MCF 10A (cell line): ENCODE measurements at regions of chr17 and their contacts with region 1.

Region 1: GRCh38 chr17:55356434-55357328 is 65.0 kb downstream of the MMD start:
- DNase-seq: peak; percentile 81
- H3K4me3 Mint-ChIP-seq: no peak overlapping the region
- H3K27ac Mint-ChIP-seq: no peak overlapping the region
- H3K4me1 Mint-ChIP-seq: no peaks in the 10 kb centered on the region
- H3K27me3 Mint-ChIP-seq: no peaks in the 10 kb centered on the region
- CTCF ChIP-seq: peak; percentile 75

Region 2: DNA sequence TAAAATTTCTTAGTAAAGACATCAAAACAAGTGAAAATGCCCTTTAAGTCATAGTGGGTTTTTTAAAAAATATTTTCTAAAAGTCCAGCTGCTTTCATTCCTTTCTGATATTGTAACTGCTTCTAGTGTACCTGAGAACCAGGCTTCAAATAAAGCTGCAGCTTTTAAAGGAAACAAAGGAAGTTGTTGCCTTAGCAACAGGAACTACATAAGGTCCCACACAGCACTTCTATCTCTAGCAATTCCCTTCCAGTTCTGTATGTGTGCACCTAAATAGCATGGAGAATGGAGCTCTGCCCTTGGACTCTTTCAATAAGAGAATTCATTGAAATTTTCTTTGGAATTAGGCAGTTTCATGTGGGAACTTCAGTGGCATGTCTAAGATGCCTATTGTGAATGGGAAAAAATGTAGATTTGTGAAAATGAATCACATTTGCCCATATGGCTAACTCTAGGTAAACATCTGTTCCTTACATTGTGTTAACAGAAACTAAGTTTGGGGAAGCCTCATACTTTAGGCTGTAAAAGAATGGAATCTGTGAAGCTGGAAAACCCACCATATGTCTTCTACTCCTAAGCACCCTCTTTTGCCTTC is 1327.6 kb before region 1 on chr17:
- CTCF ChIA-PET with region 1: no interaction called
- POLR2A ChIA-PET with region 1: no interaction called
- intact Hi-C with region 1: no loop called
- DNase-seq: no peak
- H3K4me3 Mint-ChIP-seq: no peak overlapping the region
- H3K27ac Mint-ChIP-seq: no peak overlapping the region
- H3K4me1 Mint-ChIP-seq: peaks cover 5% of the 10 kb centered on the region
- H3K27me3 Mint-ChIP-seq: no peaks in the 10 kb centered on the region
- CTCF ChIP-seq: no peak

Region 3: GRCh38 chr17:55040611-55041010 is 316.1 kb before region 1 on chr17:
- CTCF ChIA-PET with region 1: interaction called, 11 read pairs
- POLR2A ChIA-PET with region 1: no interaction called
- intact Hi-C with region 1: no loop called
- DNase-seq: no peak
- H3K4me3 Mint-ChIP-seq: no peak overlapping the region
- H3K27ac Mint-ChIP-seq: no peak overlapping the region
- H3K4me1 Mint-ChIP-seq: no peaks in the 10 kb centered on the region
- H3K27me3 Mint-ChIP-seq: no peaks in the 10 kb centered on the region
- CTCF ChIP-seq: no peak

Region 4: GRCh38 chr17:55295411-55296170 is 61.1 kb before region 1 on chr17:
- CTCF ChIA-PET with region 1: interaction called, 18 read pairs
- POLR2A ChIA-PET with region 1: no interaction called
- intact Hi-C with region 1: no loop called
- DNase-seq: peak; percentile 74
- H3K4me3 Mint-ChIP-seq: no peak overlapping the region
- H3K27ac Mint-ChIP-seq: no peak overlapping the region
- H3K4me1 Mint-ChIP-seq: no peaks in the 10 kb centered on the region
- H3K27me3 Mint-ChIP-seq: no peaks in the 10 kb centered on the region
- CTCF ChIP-seq: peak; percentile 84

Region 5: DNA sequence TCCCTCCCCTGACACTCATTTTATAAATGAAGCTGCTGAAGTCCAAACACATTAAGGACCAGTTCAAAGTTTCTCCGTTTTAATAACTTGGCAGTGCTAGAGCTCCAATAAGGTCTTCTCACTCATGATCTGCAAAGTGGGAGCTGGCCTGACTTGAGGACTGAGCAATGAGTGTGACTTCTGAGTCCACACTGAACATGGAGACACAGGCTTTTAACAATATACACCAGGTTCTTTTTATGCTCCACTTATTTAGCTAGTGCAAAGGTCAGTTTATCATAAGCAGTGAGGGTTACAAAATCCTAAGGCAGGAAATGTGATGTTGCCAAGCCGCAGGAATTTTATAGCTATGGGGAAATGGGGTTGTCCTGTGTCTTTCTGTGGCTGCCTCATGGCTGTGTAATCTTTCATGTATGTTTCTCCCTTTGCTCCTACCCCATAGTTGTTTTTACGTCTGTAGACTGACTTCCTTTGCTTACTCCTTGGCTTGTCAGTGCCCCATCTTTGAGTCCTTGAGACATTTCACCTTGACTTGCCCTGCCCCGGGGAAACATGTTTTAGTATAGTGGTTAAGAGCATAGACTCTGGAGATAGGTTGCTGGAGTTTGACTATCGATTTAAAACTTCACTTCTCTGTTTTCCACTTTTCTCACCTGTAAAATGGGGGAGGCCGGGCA is 77.1 kb after region 1 on chr17:
- CTCF ChIA-PET with region 1: interaction called, 10 read pairs
- POLR2A ChIA-PET with region 1: no interaction called
- intact Hi-C with region 1: no loop called
- DNase-seq: peak; percentile 95
- H3K4me3 Mint-ChIP-seq: peak overlapping the region; percentile 30
- H3K27ac Mint-ChIP-seq: peak overlapping the region; percentile 96
- H3K4me1 Mint-ChIP-seq: peaks cover 44% of the 10 kb centered on the region
- H3K27me3 Mint-ChIP-seq: no peaks in the 10 kb centered on the region
- CTCF ChIP-seq: no peak

Region 6: GRCh38 chr17:55513885-55514591 is 157.4 kb after region 1 on chr17:
- CTCF ChIA-PET with region 1: interaction called, 36 read pairs
- POLR2A ChIA-PET with region 1: interaction called, 4 read pairs
- intact Hi-C with region 1: loop called (anchors 1 kb)
- DNase-seq: peak; percentile 80
- H3K4me3 Mint-ChIP-seq: no peak overlapping the region
- H3K27ac Mint-ChIP-seq: no peak overlapping the region
- H3K4me1 Mint-ChIP-seq: no peaks in the 10 kb centered on the region
- H3K27me3 Mint-ChIP-seq: peaks cover 10% of the 10 kb centered on the region
- CTCF ChIP-seq: peak; percentile 82

Region 7: DNA sequence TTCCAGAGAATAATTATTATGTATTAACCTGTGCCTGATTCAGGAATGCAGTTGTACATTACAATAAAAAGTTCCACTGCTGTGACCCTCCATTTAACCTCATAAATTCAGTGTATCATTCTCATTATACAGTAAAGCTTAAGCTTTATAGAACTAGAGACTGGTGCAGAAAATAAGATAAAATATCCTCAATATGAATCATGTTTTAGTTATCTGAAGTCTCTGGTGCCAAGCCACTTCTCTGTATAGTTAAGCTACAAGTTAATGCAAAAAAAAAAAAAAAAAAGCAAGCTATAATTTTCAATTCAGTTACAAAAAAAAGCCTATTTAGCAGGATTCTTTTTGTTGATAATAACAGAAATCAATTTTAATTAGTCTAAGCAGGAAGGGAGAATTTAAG is 176.9 kb after region 1 on chr17:
- CTCF ChIA-PET with region 1: no interaction called
- POLR2A ChIA-PET with region 1: no interaction called
- intact Hi-C with region 1: no loop called
- DNase-seq: no peak
- H3K4me3 Mint-ChIP-seq: no peak overlapping the region
- H3K27ac Mint-ChIP-seq: no peak overlapping the region
- H3K4me1 Mint-ChIP-seq: no peaks in the 10 kb centered on the region
- H3K27me3 Mint-ChIP-seq: no peaks in the 10 kb centered on the region
- CTCF ChIP-seq: no peak